Mammary epithelial cell (primary cell): ENCODE measurements at regions of chr10 and their contacts with region 1.

Region 1: DNA sequence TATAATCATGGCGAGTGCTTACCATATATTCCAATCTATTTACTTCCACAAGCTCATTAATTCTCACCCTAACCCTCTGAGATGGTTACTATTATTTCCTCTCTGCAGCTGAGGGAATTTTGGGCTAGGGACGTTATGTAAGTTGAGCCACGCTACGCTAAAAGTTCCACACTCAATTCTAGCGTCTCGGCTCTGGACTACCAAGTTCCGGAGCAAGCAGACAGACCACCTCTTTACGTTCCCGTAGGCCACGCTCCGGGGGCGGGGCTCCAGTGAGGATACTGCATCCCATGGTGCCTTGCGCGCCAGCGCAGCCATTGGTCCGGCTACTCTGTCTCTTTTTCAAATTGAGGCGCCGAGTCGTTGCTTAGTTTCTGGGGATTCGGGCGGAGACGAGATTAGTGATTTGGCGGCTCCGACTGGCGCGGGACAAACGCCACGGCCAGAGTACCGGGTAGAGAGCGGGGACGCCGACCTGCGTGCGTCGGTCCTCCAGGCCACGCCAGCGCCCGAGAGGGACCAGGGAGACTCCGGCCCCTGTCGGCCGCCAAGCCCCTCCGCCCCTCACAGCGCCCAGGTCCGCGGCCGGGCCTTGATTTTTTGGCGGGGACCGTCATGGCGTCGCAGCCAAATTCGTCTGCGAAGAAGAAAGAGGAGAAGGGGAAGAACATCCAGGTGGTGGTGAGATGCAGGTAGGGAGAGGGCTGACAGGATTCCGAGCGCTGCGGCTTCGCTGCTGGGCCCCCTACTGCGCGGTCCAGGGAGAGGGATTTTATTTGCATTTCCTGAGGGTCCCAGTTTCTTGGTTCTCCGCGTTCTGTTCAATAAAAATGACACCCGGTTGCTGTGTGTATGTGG is at the start of gene KIF11:
- DNase-seq: peak; percentile 95
- H3K4me3 ChIP-seq: peak within 1 kb of the TSS; percentile 62 to 94 (median 87)
- H3K27ac ChIP-seq: peak within 1 kb of the TSS; percentile 87
- H3K4me1 ChIP-seq: peaks cover 17% of the 10 kb centered on the region
- H3K27me3 ChIP-seq: no peaks in the 10 kb centered on the region
- CTCF ChIP-seq: no peak
- total RNA-seq, gene KIF11: 2.7 to 22.4 TPM

Region 2: DNA sequence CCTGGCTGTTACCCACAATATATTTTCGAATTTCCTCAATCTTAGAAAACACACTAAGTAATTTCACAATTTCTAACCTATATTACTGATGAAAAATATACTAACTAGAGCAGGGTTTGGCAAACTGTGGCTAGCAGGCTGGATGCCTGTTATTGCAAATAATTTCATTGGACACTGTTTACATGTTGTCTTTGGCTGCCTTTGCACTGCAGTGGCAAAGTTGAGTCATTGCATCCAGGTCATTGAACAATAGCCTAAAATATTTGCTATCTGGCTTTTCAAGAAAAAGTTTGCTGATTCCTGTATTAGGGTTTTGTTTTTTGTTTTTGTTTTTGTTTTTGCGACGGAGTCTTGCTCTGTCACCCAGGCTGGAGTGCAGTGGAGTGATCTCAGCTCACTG is 47.1 kb after region 1 on chr10:
- CTCF ChIA-PET with region 1: interaction called, 9 read pairs
- dilution Hi-C with region 1: no loop called
- in situ Hi-C with region 1: no loop called
- intact Hi-C with region 1: loop called (anchors 1 kb)
- DNase-seq: peak; percentile 8
- H3K4me3 ChIP-seq: no peak overlapping the region
- H3K27ac ChIP-seq: no peak overlapping the region
- H3K4me1 ChIP-seq: no peaks in the 10 kb centered on the region
- H3K27me3 ChIP-seq: no peaks in the 10 kb centered on the region
- CTCF ChIP-seq: peak in 1 of 2 donors; percentile 20

Region 3: DNA sequence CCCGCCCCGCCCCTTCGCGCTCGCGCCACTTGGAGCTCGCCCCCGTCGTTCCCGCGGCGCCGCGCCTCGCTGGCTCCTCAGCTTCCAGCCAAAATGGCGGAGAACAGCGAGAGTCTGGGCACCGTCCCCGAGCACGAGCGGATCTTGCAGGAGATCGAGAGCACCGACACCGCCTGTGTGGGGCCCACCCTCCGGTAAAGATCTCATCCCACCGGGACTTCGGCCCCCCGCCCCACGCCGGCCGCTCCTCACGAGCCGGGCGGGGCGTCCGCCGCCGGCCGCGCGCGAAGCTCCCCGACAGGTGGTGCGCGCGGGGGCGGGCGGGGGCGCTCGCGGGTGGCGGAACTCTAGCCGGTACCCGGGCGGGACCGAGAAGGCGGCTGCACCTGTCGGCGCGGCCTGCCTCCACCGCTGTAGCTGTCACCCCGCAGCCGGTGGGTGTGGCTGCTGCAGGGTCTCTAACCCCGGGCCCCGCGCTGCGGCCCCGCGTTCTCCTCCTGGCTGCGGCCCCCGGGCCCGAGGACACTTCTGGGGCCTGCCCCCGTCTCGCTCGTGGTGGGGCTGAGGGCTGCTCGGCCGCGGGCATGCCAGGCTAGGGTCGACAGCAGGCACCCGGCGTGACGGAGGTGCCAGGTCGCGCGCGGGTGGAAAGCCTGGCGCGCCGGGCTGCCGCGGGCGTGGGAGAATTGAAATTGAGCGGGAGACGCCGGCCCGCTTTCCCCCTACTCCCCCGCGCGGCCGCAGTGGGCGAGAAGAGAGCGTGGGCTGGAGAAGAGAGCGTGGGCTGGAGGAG is 255.6 kb after region 1 on chr10 and contains the start of gene EXOC6:
- CTCF ChIA-PET with region 1: no interaction called
- dilution Hi-C with region 1: no loop called
- in situ Hi-C with region 1: loop called in 1 of 2 experiments (anchors 25 kb)
- intact Hi-C with region 1: loop called (anchors 10 kb)
- DNase-seq: peak; percentile 78
- H3K4me3 ChIP-seq: peak within 1 kb of the TSS; percentile 73 to 82 (median 80)
- H3K27ac ChIP-seq: peak within 1 kb of the TSS; percentile 1
- H3K4me1 ChIP-seq: peaks cover 18% of the 10 kb centered on the region
- H3K27me3 ChIP-seq: no peaks in the 10 kb centered on the region
- CTCF ChIP-seq: no peak
- total RNA-seq, gene EXOC6: 3.5 to 4.6 TPM